ENCODE measurements at regions of chr6 and their contacts with region 1.

Region 1: GRCh38 chr6:90274451-90275030 is 22.1 kb downstream of the BACH2 start:
- DNase-seq: peak; percentile 84
- H3K4me3 ChIP-seq: peak overlapping the region; percentile 52
- H3K27ac ChIP-seq: peak overlapping the region; percentile 79
- H3K4me1 ChIP-seq: peaks cover 87% of the 10 kb centered on the region
- CTCF ChIP-seq: peak; percentile 71

Region 2: GRCh38 chr6:90144396-90144795 is 130.1 kb before region 1 on chr6:
- CTCF ChIA-PET with region 1: no interaction called
- POLR2A ChIA-PET with region 1: no interaction called
- intact Hi-C with region 1: no loop called
- DNase-seq: no peak
- H3K4me3 ChIP-seq: no peak overlapping the region
- H3K27ac ChIP-seq: no peak overlapping the region
- H3K4me1 ChIP-seq: peaks cover 17% of the 10 kb centered on the region
- CTCF ChIP-seq: no peak

Region 3: GRCh38 chr6:90184334-90185298 is 89.9 kb before region 1 on chr6:
- CTCF ChIA-PET with region 1: no interaction called
- POLR2A ChIA-PET with region 1: interaction called, 3 read pairs
- intact Hi-C with region 1: loop called (anchors 5 kb)
- DNase-seq: no peak
- H3K4me3 ChIP-seq: no peak overlapping the region
- H3K27ac ChIP-seq: no peak overlapping the region
- H3K4me1 ChIP-seq: peaks cover 42% of the 10 kb centered on the region
- CTCF ChIP-seq: no peak

Region 4: DNA sequence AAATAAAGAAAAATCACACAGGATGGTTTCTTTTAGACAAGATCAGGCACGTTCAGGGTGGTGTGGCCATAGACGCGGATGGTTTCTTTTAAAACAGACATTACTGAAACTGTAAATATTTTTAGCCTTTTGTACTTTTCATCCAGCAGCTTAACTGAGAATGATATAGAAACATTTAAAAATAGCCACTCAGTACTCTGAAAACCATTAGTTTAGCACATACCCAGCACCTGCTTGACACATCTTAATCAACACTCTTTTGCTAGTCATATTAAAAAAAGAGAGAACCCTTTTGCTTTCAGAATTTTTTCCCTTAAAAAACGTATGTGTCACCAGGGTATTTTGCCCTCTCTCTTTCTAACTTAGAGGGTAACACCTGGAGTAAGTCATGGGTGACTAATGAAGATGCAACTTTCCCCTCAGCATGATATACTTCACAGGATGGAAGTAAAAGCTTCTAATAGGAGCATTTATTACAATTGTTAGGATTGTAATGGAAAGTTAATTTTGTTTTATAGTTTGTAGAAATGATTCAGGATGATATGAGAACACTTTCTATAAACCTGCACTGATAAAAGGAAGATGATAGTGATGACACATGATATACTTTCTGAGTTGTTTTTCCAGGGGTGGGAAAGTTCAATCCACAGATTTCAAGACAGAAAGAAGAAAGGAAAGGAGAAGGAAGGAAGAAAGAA is 23.1 kb before region 1 on chr6:
- CTCF ChIA-PET with region 1: no interaction called
- POLR2A ChIA-PET with region 1: interaction called, 6 read pairs
- intact Hi-C with region 1: loop called (anchors 1 kb)
- DNase-seq: peak; percentile 84
- H3K4me3 ChIP-seq: peak overlapping the region; percentile 24
- H3K27ac ChIP-seq: peak overlapping the region; percentile 84
- H3K4me1 ChIP-seq: peaks cover 72% of the 10 kb centered on the region
- CTCF ChIP-seq: no peak

Region 5: GRCh38 chr6:90263633-90264032 is 10.9 kb before region 1 on chr6:
- CTCF ChIA-PET with region 1: interaction called, 3 read pairs
- POLR2A ChIA-PET with region 1: interaction called, 12 read pairs
- intact Hi-C with region 1: no loop called
- DNase-seq: no peak
- H3K4me3 ChIP-seq: no peak overlapping the region
- H3K27ac ChIP-seq: no peak overlapping the region
- H3K4me1 ChIP-seq: peaks cover 28% of the 10 kb centered on the region
- CTCF ChIP-seq: no peak

Measured in OCI-LY7 (cell line).